A673 (cell line): ENCODE measurements at regions of chr16 and their contacts with region 1.

Region 1: GRCh38 chr16:49639739-49640431 is 216.0 kb downstream of the ZNF423 start:
- DNase-seq: no peak
- H3K4me3 ChIP-seq: no peak overlapping the region
- H3K27ac ChIP-seq: no peak overlapping the region
- H3K4me1 ChIP-seq: peaks cover 8% of the 10 kb centered on the region
- H3K27me3 ChIP-seq: no peaks in the 10 kb centered on the region
- CTCF ChIP-seq: no peak

Region 2: GRCh38 chr16:49928166-49929041 is 288.5 kb after region 1 on chr16:
- CTCF ChIA-PET with region 1: interaction called, 11 read pairs
- POLR2A ChIA-PET with region 1: no interaction called
- intact Hi-C with region 1: loop called (anchors 5 kb)
- DNase-seq: no peak
- H3K4me3 ChIP-seq: no peak overlapping the region
- H3K27ac ChIP-seq: no peak overlapping the region
- H3K4me1 ChIP-seq: no peaks in the 10 kb centered on the region
- H3K27me3 ChIP-seq: no peaks in the 10 kb centered on the region
- CTCF ChIP-seq: no peak

Region 3: DNA sequence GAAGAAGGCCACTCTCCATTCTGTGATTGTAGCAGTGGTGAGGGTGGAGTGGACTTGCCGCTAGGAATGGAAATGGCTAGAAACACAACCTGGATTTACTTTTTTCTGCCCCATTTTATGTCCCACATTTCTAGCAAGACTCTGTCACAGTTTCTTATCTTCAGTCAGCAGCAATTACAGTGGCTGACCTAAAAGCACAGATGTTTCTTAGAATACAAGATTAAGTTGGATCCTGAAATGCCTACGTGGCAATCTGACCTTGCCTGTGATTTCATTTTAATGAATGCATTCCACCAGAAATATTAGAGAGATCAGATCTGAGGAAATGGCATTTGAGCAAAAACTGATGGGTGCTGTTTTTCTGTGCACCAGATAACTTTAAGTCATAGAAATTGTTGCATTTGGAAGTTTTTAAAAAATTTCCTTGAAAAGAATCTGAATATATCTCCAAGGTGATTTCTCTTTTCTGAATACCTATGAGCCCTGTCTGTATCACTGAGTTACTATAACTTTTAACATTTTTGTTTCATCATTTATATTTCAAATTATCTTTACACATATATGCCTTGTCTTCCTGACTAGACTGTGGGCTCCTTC is 431.3 kb after region 1 on chr16:
- CTCF ChIA-PET with region 1: no interaction called
- POLR2A ChIA-PET with region 1: no interaction called
- intact Hi-C with region 1: no loop called
- DNase-seq: no peak
- H3K4me3 ChIP-seq: no peak overlapping the region
- H3K27ac ChIP-seq: no peak overlapping the region
- H3K4me1 ChIP-seq: no peaks in the 10 kb centered on the region
- H3K27me3 ChIP-seq: no peaks in the 10 kb centered on the region
- CTCF ChIP-seq: no peak